ENCODE measurements at regions of chr11 and their contacts with region 1.

Region 1: DNA sequence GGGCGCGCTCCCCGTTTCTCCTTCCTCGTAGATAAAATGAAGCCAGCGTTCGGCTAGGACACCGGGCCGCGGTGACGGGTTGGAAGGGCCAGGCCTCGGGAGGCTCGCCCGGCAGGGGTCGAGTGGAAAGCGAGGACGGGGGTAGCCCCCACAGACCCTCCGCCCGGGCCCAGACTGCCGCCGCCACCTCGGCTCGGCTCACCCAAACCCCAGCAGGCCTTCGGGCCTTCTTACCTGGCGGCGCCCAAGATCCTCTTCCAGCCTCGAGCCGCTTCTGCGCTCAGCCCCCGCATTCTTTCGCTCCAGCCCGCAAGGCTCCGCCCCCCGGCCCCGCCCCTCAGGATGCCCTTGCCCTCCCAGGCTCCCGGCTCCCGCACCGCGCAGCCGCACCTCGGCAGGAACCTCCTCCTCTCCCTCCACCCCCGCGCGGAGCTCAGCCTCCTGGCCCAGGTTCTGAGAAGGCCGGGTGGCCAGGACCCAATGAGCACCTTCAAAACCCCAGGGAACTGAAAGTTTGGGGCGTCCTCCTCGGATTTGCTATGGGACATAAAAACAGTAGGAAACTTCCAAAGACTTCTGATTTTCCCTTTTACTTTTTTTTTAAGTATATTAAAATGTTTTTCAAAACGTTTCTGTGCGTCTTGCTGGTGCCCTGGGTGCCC is at the start of gene CD59:
- DNase-seq: peak; percentile 89 to 90 (median 89)
- H3K4me3 ChIP-seq: peak within 1 kb of the TSS; percentile 71 to 93 (median 83)
- H3K27ac ChIP-seq: peak within 1 kb of the TSS; percentile 47 to 81
- H3K4me1 ChIP-seq: peaks cover 7 to 52% (median 45%) of the 10 kb centered on the region in 4 experiments
- H3K27me3 ChIP-seq: no peaks in the 10 kb centered on the region

Region 2: GRCh38 chr11:33687733-33688479 is 48.4 kb before region 1 on chr11:
- CTCF ChIA-PET with region 1: no interaction called
- POLR2A ChIA-PET with region 1: no interaction called
- DNase-seq: peak; percentile 38 to 54 (median 50)
- H3K4me3 ChIP-seq: no peak overlapping the region
- H3K27ac ChIP-seq: no peak overlapping the region
- H3K4me1 ChIP-seq: peaks cover 0 to 9% (median 2%) of the 10 kb centered on the region in 4 experiments
- H3K27me3 ChIP-seq: peaks cover 0 to 2% (median 0%) of the 10 kb centered on the region in 5 experiments

Region 3: GRCh38 chr11:33700425-33701271 is 35.6 kb before region 1 on chr11 and contains the start of gene C11orf91:
- CTCF ChIA-PET with region 1: interaction called, 13 read pairs
- POLR2A ChIA-PET with region 1: no interaction called
- DNase-seq: peak; percentile 89 to 94 (median 93)
- H3K4me3 ChIP-seq: peak within 1 kb of the TSS; percentile 52 to 80 (median 71)
- H3K27ac ChIP-seq: no peak within 1 kb of the TSS
- H3K4me1 ChIP-seq: peaks cover 10 to 29% (median 23%) of the 10 kb centered on the region in 4 experiments
- H3K27me3 ChIP-seq: peaks cover 0 to 5% (median 3%) of the 10 kb centered on the region in 5 experiments

Region 4: GRCh38 chr11:33716236-33716635 is 20.0 kb before region 1 on chr11:
- CTCF ChIA-PET with region 1: interaction called, 151 read pairs
- POLR2A ChIA-PET with region 1: interaction called, 14 read pairs
- DNase-seq: peak; percentile 44 to 68 (median 67)
- H3K4me3 ChIP-seq: no peak overlapping the region
- H3K27ac ChIP-seq: no peak overlapping the region
- H3K4me1 ChIP-seq: peaks cover 5 to 12% (median 7%) of the 10 kb centered on the region in 4 experiments
- H3K27me3 ChIP-seq: no peaks in the 10 kb centered on the region

Region 5: DNA sequence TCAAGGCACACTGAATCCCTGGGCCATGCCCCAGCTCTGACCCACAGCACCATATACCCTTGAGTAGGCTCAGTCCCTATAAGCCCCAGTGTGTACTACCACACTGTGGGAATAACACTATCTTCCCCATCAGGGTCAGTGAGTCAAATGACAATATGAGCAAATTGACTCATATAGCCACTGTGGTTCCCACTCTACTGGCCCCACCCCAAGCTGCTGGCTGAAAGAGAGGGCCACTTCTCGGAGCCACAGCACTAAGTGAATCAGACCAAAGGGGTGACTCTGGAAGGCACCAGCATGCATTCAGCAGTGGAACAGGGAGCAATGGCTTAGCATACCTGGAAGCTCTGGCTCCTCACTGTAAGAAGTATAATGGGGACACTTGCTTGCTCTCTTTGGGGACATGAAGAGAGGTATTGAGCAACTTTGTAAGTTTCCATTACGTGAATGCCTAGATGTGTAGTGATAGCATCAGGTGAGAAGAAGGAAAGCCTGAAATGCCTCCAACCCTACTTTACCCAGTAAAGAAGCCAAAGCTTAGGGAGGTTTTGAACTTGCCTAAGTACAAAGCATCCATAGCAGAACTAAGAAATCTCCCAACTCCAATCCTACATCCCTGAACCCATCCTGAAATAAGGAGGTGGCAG is 13.6 kb before region 1 on chr11:
- CTCF ChIA-PET with region 1: interaction called, 151 read pairs
- POLR2A ChIA-PET with region 1: interaction called, 6 read pairs
- DNase-seq: no peak
- H3K4me3 ChIP-seq: no peak overlapping the region
- H3K27ac ChIP-seq: peak overlapping the region in 1 of 2 experiments; percentile 28
- H3K4me1 ChIP-seq: peaks cover 5 to 48% (median 31%) of the 10 kb centered on the region in 4 experiments
- H3K27me3 ChIP-seq: no peaks in the 10 kb centered on the region

Region 6: GRCh38 chr11:33785609-33786008 is 49.3 kb after region 1 on chr11:
- CTCF ChIA-PET with region 1: no interaction called
- POLR2A ChIA-PET with region 1: no interaction called
- DNase-seq: no peak
- H3K4me3 ChIP-seq: no peak overlapping the region
- H3K27ac ChIP-seq: no peak overlapping the region
- H3K4me1 ChIP-seq: peaks cover 0 to 3% (median 0%) of the 10 kb centered on the region in 4 experiments
- H3K27me3 ChIP-seq: no peaks in the 10 kb centered on the region

Measured in common myeloid progenitor, CD34-positive (primary cell).